Naive thymus-derived CD4-positive, alpha-beta T cell (primary cell): ENCODE measurements at regions of chr17 and their contacts with region 1.

Region 1: GRCh38 chr17:2406903-2407790 is 6.3 kb upstream of the MNT start:
- DNase-seq: peak in 1 of 9 donors; percentile 45
- ATAC-seq: no peak
- H3K4me3 ChIP-seq: no peak overlapping the region
- H3K4me3 Mint-ChIP-seq: no peak overlapping the region
- H3K27ac ChIP-seq: no peak overlapping the region
- H3K27ac Mint-ChIP-seq: peak overlapping the region in 5 of 9 donors; percentile 26 to 67 (median 50)
- H3K4me1 ChIP-seq: peaks cover 6% of the 10 kb centered on the region in 2 donors
- H3K4me1 Mint-ChIP-seq: peaks cover 10 to 31% (median 13%) of the 10 kb centered on the region in 7 donors
- H3K27me3 ChIP-seq: no peaks in the 10 kb centered on the region
- H3K27me3 Mint-ChIP-seq: no peaks in the 10 kb centered on the region

Region 2: GRCh38 chr17:2386400-2387085 is 20.6 kb before region 1 on chr17:
- CTCF ChIA-PET with region 1: interaction called, 41 read pairs
- POLR2A ChIA-PET with region 1: interaction called, 82 read pairs
- intact Hi-C with region 1: loop called in 1 of 2 experiments (anchors 1 kb)
- DNase-seq: peak in 1 of 9 donors; percentile 8
- ATAC-seq: no peak
- H3K4me3 ChIP-seq: no peak overlapping the region
- H3K4me3 Mint-ChIP-seq: no peak overlapping the region
- H3K27ac ChIP-seq: no peak overlapping the region
- H3K27ac Mint-ChIP-seq: peak overlapping the region in 1 of 9 donors; percentile 65
- H3K4me1 ChIP-seq: peaks cover 3 to 19% of the 10 kb centered on the region in 2 donors
- H3K4me1 Mint-ChIP-seq: peaks cover 13 to 35% (median 27%) of the 10 kb centered on the region in 7 donors
- H3K27me3 ChIP-seq: no peaks in the 10 kb centered on the region
- H3K27me3 Mint-ChIP-seq: no peaks in the 10 kb centered on the region